Common myeloid progenitor, CD34-positive (primary cell): ENCODE measurements at regions of chr5 and their contacts with region 1.

Region 1: GRCh38 chr5:164518052-164518740 is 1012.8 kb downstream of the MAT2B start:
- DNase-seq: peak in 2 of 3 donors; percentile 7 to 19
- H3K4me3 ChIP-seq: peak overlapping the region in 2 of 7 experiments; percentile 3 to 10
- H3K27ac ChIP-seq: no peak overlapping the region
- H3K4me1 ChIP-seq: peaks cover 0 to 16% (median 8%) of the 10 kb centered on the region in 4 experiments
- H3K27me3 ChIP-seq: no peaks in the 10 kb centered on the region

Region 2: GRCh38 chr5:164475339-164475977 is 42.7 kb before region 1 on chr5:
- CTCF ChIA-PET with region 1: no interaction called
- POLR2A ChIA-PET with region 1: interaction called, 10 read pairs
- DNase-seq: peak in 2 of 3 donors; percentile 15 to 32
- H3K4me3 ChIP-seq: no peak overlapping the region
- H3K27ac ChIP-seq: no peak overlapping the region
- H3K4me1 ChIP-seq: no peaks in the 10 kb centered on the region
- H3K27me3 ChIP-seq: no peaks in the 10 kb centered on the region

Region 3: DNA sequence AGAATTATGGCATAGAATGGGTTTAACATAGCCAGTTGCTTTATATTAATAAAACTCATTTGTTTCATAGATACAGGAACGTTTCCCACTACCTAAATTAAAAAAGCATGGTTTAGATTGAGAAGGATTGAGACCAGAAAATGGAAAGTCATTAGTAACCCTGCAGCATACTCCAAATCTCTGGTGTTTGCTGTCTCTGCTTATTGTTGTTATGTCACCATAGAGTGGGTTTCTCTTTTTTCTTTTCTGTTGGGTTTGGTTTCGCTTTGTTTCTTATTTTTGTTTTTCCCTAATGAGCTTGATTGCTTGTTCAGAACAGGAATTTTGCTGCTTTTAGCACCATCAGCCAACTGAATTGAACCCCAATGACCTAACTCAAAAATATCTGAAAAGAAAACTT is 22.0 kb after region 1 on chr5:
- CTCF ChIA-PET with region 1: no interaction called
- POLR2A ChIA-PET with region 1: no interaction called
- DNase-seq: no peak
- H3K4me3 ChIP-seq: no peak overlapping the region
- H3K27ac ChIP-seq: no peak overlapping the region
- H3K4me1 ChIP-seq: no peaks in the 10 kb centered on the region
- H3K27me3 ChIP-seq: no peaks in the 10 kb centered on the region